CD4-positive, alpha-beta T cell (primary cell): ENCODE measurements at regions of chr9 and their contacts with region 1.

Region 1: GRCh38 chr9:136400038-136400834 is at the start of gene SNAPC4:
- DNase-seq: peak; percentile 75 to 95 (median 86)
- ATAC-seq: peak; percentile 66
- H3K4me3 ChIP-seq: peak within 1 kb of the TSS; percentile 72
- H3K4me3 Mint-ChIP-seq: peak within 1 kb of the TSS; percentile 88
- H3K27ac ChIP-seq: no peak within 1 kb of the TSS
- H3K27ac Mint-ChIP-seq: peak within 1 kb of the TSS; percentile 55
- H3K4me1 ChIP-seq: peaks cover 59% of the 10 kb centered on the region
- H3K4me1 Mint-ChIP-seq: peaks cover 41% of the 10 kb centered on the region
- H3K27me3 ChIP-seq: no peaks in the 10 kb centered on the region
- H3K27me3 Mint-ChIP-seq: no peaks in the 10 kb centered on the region
- CTCF ChIP-seq: peak; percentile 87
- total RNA-seq, gene SNAPC4: 7.7 to 8.0 TPM

Region 2: GRCh38 chr9:136312436-136312835 is 87.8 kb before region 1 on chr9:
- CTCF ChIA-PET with region 1: no interaction called
- POLR2A ChIA-PET with region 1: no interaction called
- intact Hi-C with region 1: loop called in 1 of 2 experiments (anchors 1 kb)
- DNase-seq: peak in 12 of 14 experiments; percentile 15 to 69 (median 40)
- ATAC-seq: peak; percentile 70
- H3K4me3 ChIP-seq: no peak overlapping the region
- H3K4me3 Mint-ChIP-seq: no peak overlapping the region
- H3K27ac ChIP-seq: no peak overlapping the region
- H3K27ac Mint-ChIP-seq: no peak overlapping the region
- H3K4me1 ChIP-seq: peaks cover 9% of the 10 kb centered on the region
- H3K4me1 Mint-ChIP-seq: no peaks in the 10 kb centered on the region
- H3K27me3 ChIP-seq: peaks cover 20 to 22% of the 10 kb centered on the region in 2 experiments
- H3K27me3 Mint-ChIP-seq: peaks cover 4% of the 10 kb centered on the region
- CTCF ChIP-seq: peak; percentile 28